WTC11 (cell line): ENCODE measurements at regions of chr1 and their contacts with region 1.

Region 1: GRCh38 chr1:158117854-158118704 is 62.6 kb upstream of the CD1D start:
- DNase-seq: peak; percentile 87
- ATAC-seq: peak; percentile 81
- H3K4me3 Mint-ChIP-seq: peak overlapping the region; percentile 51
- H3K27ac Mint-ChIP-seq: no peak overlapping the region; the same call in none of the 2 replicates
- H3K4me1 Mint-ChIP-seq: peaks cover 61% of the 10 kb centered on the region
- H3K27me3 Mint-ChIP-seq: peaks cover 23% of the 10 kb centered on the region
- CTCF ChIP-seq: no peak; the same call in 1 of the 2 replicates

Region 2: DNA sequence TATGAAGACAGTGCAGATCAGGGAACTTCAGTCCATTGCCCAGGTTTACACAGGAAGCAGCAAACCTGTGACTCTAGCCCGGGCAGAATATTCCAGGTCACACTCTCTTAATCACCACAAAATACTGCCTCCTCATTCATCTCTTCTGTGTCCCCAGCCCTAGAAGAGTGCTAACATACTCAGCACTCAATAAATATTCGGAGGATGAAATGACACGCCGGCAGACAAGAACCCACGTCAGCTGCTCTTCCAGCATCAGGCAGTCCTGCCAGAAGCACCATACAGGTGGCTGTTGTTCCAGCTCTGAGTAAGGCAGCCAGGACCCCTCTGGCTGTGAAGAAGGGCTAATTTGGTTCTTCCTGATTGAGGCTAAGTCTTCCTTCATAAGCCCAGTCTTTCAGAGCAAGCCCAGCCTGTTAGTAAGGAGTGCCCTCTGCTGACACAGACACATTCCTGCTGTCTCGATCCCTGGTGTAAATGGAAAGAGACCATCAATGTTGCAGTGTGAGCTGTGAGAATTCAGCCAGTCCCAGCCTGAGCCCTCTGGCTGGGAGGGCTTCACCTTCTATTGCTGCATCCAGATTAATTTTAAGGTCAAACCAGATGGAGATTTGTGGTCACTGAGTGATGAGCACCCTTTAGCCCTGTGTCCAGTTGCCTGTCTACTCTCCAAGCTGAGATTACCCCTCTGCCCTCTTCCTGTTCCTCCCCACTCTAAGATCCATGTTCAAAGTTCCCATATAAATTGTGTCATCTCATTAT is 169.6 kb before region 1 on chr1:
- CTCF ChIA-PET with region 1: interaction called, 33 read pairs
- POLR2A ChIA-PET with region 1: no interaction called
- DNase-seq: peak; percentile 59
- ATAC-seq: peak; percentile 99
- H3K4me3 Mint-ChIP-seq: no peak overlapping the region
- H3K27ac Mint-ChIP-seq: no peak overlapping the region
- H3K4me1 Mint-ChIP-seq: peaks cover 2% of the 10 kb centered on the region; the same call in 1 of the 2 replicates
- H3K27me3 Mint-ChIP-seq: peaks cover 2% of the 10 kb centered on the region
- CTCF ChIP-seq: 0 out of 2 replicates have a peak, but pooled peaks have one; percentile 16

Region 3: DNA sequence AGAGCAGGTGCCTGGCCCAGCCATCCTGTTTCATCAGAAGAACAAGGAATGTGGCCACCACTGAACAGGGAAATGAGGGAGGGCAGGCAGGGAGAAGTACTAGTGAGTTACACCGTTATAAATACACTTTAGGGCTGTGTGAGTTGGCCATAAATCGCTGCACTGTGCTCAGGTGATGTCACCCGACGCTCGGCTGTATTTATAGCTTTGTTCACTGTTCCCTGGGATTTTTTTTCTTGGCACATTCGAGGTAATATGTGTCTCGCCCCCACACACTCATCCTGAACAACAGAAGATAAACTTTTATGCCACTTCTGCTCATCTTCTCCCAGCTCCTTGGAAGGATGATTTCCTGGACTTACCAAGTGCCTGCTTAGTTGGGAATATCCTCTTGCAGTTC is 133.6 kb before region 1 on chr1:
- CTCF ChIA-PET with region 1: interaction called, 475 read pairs
- POLR2A ChIA-PET with region 1: no interaction called
- DNase-seq: no peak
- ATAC-seq: no peak
- H3K4me3 Mint-ChIP-seq: no peak overlapping the region
- H3K27ac Mint-ChIP-seq: no peak overlapping the region
- H3K4me1 Mint-ChIP-seq: peaks cover 35% of the 10 kb centered on the region
- H3K27me3 Mint-ChIP-seq: peaks cover 6% of the 10 kb centered on the region; the same call in 1 of the 2 replicates
- CTCF ChIP-seq: no peak

Region 4: DNA sequence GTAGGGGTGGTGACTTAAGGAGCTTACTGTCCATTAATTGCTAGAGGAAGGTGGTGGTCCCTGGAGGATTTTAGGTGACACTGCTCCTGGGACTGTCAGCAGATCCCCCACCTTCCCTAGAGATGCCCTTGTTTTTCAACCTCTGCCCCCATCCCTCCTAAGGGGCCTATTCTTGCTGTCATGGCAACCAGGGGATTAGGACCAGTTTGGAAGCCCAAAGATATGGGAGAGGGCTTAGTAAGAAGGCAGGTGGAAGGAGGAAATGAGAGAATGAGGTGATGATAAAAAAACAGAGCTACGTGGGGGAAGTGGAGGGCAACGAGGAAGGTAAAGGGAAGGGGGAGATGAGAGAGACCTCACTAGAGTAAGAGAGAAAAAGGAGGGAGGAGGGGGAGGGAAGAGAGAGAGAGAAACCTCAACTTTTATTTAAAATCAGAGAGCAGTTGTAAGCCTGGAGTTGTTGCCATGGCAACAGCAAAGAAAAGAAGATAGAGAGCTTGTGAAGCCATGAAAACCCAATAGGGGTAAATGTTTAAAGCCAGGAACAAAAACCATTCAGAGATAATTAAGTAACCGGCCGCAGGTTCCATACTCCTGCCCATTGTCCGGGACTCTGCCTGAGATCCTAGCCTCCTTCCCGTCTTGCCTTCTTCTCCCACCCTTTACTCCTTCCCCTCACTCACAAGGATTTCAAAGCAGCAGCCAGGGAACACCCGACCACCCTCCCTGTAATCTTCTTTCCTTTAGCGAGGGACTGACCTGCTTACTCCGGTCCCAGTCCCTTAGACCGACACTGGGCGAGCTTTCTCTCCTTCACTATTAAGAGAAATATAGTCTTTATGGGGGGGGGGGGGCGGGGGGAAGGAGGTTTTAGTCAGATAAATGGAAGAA is 104.0 kb before region 1 on chr1:
- CTCF ChIA-PET with region 1: interaction called, 15 read pairs
- POLR2A ChIA-PET with region 1: no interaction called
- DNase-seq: no peak
- ATAC-seq: peak; percentile 4
- H3K4me3 Mint-ChIP-seq: peak overlapping the region; percentile 44
- H3K27ac Mint-ChIP-seq: peak overlapping the region; percentile 96
- H3K4me1 Mint-ChIP-seq: peaks cover 95% of the 10 kb centered on the region
- H3K27me3 Mint-ChIP-seq: no peaks in the 10 kb centered on the region
- CTCF ChIP-seq: no peak

Region 5: GRCh38 chr1:158043232-158043631 is 74.8 kb before region 1 on chr1:
- CTCF ChIA-PET with region 1: interaction called, 12 read pairs
- POLR2A ChIA-PET with region 1: no interaction called
- DNase-seq: no peak
- ATAC-seq: peak; percentile 46
- H3K4me3 Mint-ChIP-seq: no peak overlapping the region
- H3K27ac Mint-ChIP-seq: no peak overlapping the region
- H3K4me1 Mint-ChIP-seq: peaks cover 55% of the 10 kb centered on the region
- H3K27me3 Mint-ChIP-seq: no peaks in the 10 kb centered on the region
- CTCF ChIP-seq: no peak

Region 6: GRCh38 chr1:158075078-158075477 is 43.0 kb before region 1 on chr1:
- CTCF ChIA-PET with region 1: interaction called, 35 read pairs
- POLR2A ChIA-PET with region 1: interaction called, 3 read pairs
- DNase-seq: no peak
- ATAC-seq: no peak
- H3K4me3 Mint-ChIP-seq: no peak overlapping the region
- H3K27ac Mint-ChIP-seq: no peak overlapping the region
- H3K4me1 Mint-ChIP-seq: peaks cover 79% of the 10 kb centered on the region
- H3K27me3 Mint-ChIP-seq: no peaks in the 10 kb centered on the region
- CTCF ChIP-seq: no peak

Region 7: GRCh38 chr1:158101927-158102326 is 16.2 kb before region 1 on chr1:
- CTCF ChIA-PET with region 1: interaction called, 443 read pairs
- POLR2A ChIA-PET with region 1: interaction called, 3 read pairs
- DNase-seq: no peak
- ATAC-seq: no peak
- H3K4me3 Mint-ChIP-seq: no peak overlapping the region
- H3K27ac Mint-ChIP-seq: peak overlapping the region; percentile 96
- H3K4me1 Mint-ChIP-seq: peaks cover 94% of the 10 kb centered on the region
- H3K27me3 Mint-ChIP-seq: no peaks in the 10 kb centered on the region
- CTCF ChIP-seq: no peak

Region 8: DNA sequence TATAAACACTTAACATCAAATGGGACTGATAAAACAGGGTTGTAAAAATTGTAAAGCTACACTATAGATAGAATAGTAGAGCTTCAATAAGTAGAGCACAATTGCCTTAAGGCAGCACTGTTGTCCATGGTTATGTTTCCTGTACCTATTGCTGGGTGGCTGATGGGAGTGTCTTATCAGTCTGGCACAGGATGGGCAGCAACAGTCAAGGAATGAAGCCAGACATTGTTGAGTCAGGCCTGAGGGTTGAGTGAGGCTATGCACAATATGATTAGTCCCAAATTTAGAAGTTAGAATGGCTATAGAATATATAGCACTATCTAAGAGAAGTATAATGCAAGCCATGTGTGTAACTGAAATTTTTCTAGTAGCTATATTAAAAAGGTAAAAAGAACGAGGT is 37.6 kb after region 1 on chr1:
- CTCF ChIA-PET with region 1: no interaction called
- POLR2A ChIA-PET with region 1: no interaction called
- DNase-seq: no peak
- ATAC-seq: no peak
- H3K4me3 Mint-ChIP-seq: no peak overlapping the region
- H3K27ac Mint-ChIP-seq: no peak overlapping the region
- H3K4me1 Mint-ChIP-seq: peaks cover 12% of the 10 kb centered on the region
- H3K27me3 Mint-ChIP-seq: peaks cover 27% of the 10 kb centered on the region
- CTCF ChIP-seq: no peak